Aorta (tissue), 5 donors: ENCODE measurements at regions of chr2 and their contacts with region 1.

Region 1: DNA sequence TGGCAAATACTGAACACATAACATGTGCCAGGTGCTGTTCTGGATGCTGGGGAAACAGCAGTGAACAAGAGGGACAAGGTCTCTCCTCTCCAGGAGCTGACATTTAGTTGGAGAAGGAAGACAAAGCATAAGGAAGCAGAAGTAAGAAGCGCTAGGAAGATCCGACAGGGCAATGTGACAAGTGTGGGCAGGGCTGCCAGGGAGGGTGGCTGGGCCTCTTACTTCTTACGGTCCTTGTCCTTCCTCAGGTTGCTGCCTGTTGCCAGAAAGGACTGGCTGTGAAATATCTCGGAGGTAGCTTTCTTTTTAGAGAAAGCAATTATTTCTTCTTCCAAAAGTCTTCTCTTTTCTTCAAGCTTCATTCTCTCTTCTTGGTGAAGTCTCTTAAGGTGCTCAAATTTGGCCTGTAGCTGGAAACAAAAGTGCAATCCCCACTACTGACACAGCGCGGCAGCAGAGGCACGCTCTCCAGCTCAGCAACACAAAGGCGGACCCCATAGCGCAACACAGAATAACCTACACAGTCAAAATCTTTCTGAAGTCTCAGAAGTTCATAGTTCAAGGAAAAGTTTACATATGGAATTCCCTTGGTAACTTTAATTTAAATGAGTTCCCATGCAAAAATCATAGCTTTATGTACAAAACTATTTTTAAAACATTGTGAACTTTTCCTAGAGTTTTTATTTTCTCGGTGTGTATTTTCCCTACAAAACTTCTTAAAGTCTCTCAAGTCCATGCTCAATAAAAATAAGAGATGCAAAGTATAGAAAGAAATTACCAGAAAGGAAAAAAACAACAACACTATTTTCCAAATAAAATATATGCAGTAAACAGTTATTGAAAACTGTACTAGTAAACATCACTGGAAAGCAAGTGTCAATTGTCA is 67.7 kb downstream of the SEPTIN10 start:
- DNase-seq: peak in 1 of 2 donors; percentile 87
- ATAC-seq: peak; percentile 89
- H3K4me3 ChIP-seq: no peak overlapping the region
- H3K27ac ChIP-seq: no peak overlapping the region
- H3K4me1 ChIP-seq: peaks cover 0 to 1% of the 10 kb centered on the region in 2 donors
- H3K27me3 ChIP-seq: no peaks in the 10 kb centered on the region

Region 2: GRCh38 chr2:109475531-109476210 is 70.4 kb before region 1 on chr2:
- intact Hi-C with region 1: no loop called
- DNase-seq: peak in 1 of 2 donors; percentile 61
- ATAC-seq: no peak
- H3K4me3 ChIP-seq: no peak overlapping the region
- H3K27ac ChIP-seq: peak overlapping the region in 1 of 2 donors; percentile 10
- H3K4me1 ChIP-seq: no peaks in the 10 kb centered on the region
- H3K27me3 ChIP-seq: no peaks in the 10 kb centered on the region

Region 3: DNA sequence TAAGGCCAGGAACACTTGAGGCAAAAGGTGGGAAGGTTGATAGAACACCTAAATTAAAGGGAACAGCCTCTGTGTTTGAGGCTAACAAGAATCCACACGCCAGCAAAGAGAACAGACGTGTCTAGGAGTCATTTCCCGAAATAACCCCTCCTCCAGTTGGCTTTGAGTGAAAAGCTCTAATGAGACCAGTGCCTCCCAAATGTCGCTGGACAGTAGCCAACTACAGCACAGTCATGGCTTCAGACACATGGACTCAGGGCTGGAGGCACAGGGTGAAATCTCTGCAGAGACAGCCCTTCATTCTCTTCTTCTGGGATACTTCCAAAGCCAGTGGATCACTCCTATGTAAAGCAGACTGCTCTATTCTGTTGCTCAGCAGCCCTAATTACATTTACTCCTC is 117.7 kb after region 1 on chr2:
- intact Hi-C with region 1: no loop called
- DNase-seq: peak in 1 of 2 donors; percentile 85
- ATAC-seq: peak; percentile 73
- H3K4me3 ChIP-seq: no peak overlapping the region
- H3K27ac ChIP-seq: no peak overlapping the region
- H3K4me1 ChIP-seq: no peaks in the 10 kb centered on the region
- H3K27me3 ChIP-seq: no peaks in the 10 kb centered on the region

Region 4: DNA sequence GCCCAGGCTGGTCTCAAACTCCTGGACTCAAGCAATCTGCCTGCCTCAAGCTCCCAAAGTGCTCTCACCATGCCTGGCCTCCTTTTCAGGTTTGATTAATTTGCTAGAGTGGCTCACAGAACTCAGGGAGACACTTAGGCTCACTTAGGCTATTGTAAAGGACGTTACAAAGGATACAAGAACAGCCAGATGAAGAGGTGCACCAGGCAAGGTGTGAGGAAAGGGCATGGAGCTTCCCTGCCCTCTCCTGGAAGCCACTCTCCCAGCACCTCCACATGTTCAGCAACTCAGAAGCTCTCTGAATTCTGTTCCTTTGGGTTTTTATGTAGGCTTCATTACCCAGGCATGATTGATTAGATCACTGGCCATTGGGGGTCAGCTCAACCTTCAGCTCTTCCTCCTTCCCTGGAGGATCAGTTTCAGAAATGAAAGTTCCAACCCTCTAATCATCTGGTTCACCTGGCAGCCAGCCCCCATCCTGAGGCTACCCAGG is 169.3 kb after region 1 on chr2:
- intact Hi-C with region 1: loop called (anchors 1 to 5 kb)
- DNase-seq: no peak
- ATAC-seq: peak; percentile 68
- H3K4me3 ChIP-seq: no peak overlapping the region
- H3K27ac ChIP-seq: no peak overlapping the region
- H3K4me1 ChIP-seq: no peaks in the 10 kb centered on the region
- H3K27me3 ChIP-seq: no peaks in the 10 kb centered on the region